ENCODE measurements at regions of chr11 and their contacts with region 1.

Region 1: GRCh38 chr11:60831143-60831500 is 10.8 kb upstream of the CCDC86 start:
- DNase-seq: peak; percentile 84
- H3K4me3 Mint-ChIP-seq: no peak overlapping the region
- H3K27ac Mint-ChIP-seq: no peak overlapping the region
- H3K4me1 Mint-ChIP-seq: peaks cover 30% of the 10 kb centered on the region
- H3K27me3 Mint-ChIP-seq: peaks cover 7% of the 10 kb centered on the region

Region 2: GRCh38 chr11:60841797-60842667 is 10.9 kb after region 1 on chr11 and contains the start of gene CCDC86:
- CTCF ChIA-PET with region 1: interaction called, 23 read pairs
- POLR2A ChIA-PET with region 1: no interaction called
- DNase-seq: peak; percentile 98
- H3K4me3 Mint-ChIP-seq: peak within 1 kb of the TSS; percentile 79
- H3K27ac Mint-ChIP-seq: peak within 1 kb of the TSS; percentile 86
- H3K4me1 Mint-ChIP-seq: peaks cover 62% of the 10 kb centered on the region
- H3K27me3 Mint-ChIP-seq: no peaks in the 10 kb centered on the region
- total RNA-seq, gene CCDC86: 15.3 to 16.5 TPM

Region 3: GRCh38 chr11:60899046-60899936 is 68.2 kb after region 1 on chr11:
- CTCF ChIA-PET with region 1: interaction called, 87 read pairs
- POLR2A ChIA-PET with region 1: no interaction called
- DNase-seq: peak; percentile 33
- H3K4me3 Mint-ChIP-seq: no peak overlapping the region
- H3K27ac Mint-ChIP-seq: no peak overlapping the region
- H3K4me1 Mint-ChIP-seq: peaks cover 13% of the 10 kb centered on the region
- H3K27me3 Mint-ChIP-seq: no peaks in the 10 kb centered on the region

Region 4: DNA sequence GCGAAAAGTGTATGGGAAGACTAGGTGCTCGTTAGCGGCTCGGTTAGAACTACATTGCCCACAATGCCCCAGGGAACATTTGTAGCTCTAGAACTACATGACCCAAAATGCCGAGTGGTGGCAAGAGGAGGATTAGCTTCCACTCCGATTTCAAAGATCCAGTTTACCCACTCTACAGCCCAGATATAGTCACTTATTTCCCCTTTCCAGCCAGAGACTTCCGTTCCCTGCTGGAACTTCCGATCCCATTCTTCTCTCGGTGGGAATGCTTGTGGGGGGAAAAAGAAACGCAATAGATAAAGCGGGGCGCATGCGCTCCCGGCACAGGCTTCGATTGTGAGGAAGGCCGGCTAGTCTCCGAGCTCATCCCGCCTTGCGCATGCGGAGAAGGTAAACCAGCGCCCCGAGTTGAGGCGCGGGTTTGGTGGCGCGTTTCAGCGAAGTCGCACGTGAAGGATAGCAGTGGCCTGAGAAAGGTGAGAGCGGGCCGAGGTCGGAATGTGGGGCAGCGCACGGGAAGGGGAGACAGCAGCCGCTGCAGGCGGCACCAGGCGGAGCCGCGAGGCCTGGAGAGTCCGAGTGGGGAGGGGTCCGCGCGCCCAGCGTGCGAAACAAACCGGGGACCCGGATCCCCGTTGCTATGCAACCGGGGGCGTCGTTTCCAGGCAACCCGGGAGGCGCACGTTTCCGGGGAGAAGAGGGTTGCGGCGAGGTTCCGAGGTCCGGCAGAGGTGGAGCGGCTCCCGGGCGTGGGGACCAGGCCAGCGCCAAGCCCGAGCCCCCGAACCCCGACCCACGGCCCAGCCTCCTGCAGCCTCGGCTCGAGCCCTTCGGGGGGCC is 82.9 kb after region 1 on chr11 and contains the start of gene TMEM109:
- CTCF ChIA-PET with region 1: interaction called, 21 read pairs
- POLR2A ChIA-PET with region 1: no interaction called
- DNase-seq: peak; percentile 88
- H3K4me3 Mint-ChIP-seq: peak within 1 kb of the TSS; percentile 96
- H3K27ac Mint-ChIP-seq: peak within 1 kb of the TSS; percentile 95
- H3K4me1 Mint-ChIP-seq: peaks cover 46% of the 10 kb centered on the region
- H3K27me3 Mint-ChIP-seq: peaks cover 7% of the 10 kb centered on the region
- total RNA-seq, gene TMEM109: 101 to 110 TPM

Measured in activated CD4-positive, alpha-beta memory T cell treated with anti-CD3 and anti-CD28 coated beads, Interleukin-2, amount 10 ng/mL, durations not matched to agents 7 days and 5 days (primary cell).